Dorsolateral prefrontal cortex (tissue), 120 donors: ENCODE measurements at regions of chr15 and their contacts with region 1.

Region 1: DNA sequence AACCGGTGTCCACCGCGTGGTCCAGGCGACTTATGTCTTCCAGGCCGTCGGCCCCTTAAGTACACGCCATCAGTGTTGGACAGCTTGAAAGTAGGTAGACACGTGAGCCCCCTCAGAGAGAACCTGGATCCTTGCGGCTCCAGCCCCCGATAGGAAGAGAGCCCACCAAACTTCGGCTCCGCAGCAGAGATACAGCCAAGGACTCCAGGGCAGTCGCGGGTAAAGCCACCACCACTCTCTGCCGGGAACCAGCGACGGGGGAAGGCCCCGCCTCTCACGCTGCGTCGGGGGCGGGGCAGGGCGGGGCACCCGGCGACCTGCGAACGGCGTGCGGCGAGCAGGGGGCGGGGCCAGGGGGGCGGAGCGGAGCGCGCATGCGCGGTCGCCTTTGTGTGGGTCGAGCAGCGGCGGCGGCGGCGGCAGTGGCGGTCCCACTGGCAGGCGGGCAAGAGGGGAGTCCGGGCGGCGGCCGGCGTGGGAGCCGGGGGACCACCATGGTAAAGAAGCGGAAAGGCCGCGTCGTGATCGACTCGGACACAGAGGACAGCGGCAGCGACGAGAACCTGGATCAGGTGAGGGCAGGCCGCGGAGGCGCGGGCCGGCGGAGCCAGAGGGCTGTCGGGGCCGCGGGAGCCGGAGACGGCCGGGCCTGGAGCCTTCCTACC is at the start of gene RTF1:
- DNase-seq: peak; percentile 87 to 98 (median 92)
- H3K4me3 ChIP-seq: peak within 1 kb of the TSS; percentile 64 to 100 (median 98)
- H3K27ac ChIP-seq: peak within 1 kb of the TSS in 57 of 59 donors; percentile 7 to 95 (median 83)
- H3K27me3 ChIP-seq: no peaks in the 10 kb centered on the region
- CTCF ChIP-seq: peak in 20 of 56 donors; percentile 0 to 45 (median 23)
- total RNA-seq, gene RTF1: 17.2 to 72.4 (median 43.7) TPM

Region 2: GRCh38 chr15:40814901-40815670 is 601.8 kb before region 1 on chr15:
- intact Hi-C with region 1: no loop called
- DNase-seq: peak in 4 of 10 donors; percentile 26 to 38 (median 33)
- H3K4me3 ChIP-seq: no peak overlapping the region
- H3K27ac ChIP-seq: peak overlapping the region in 3 of 59 donors; percentile 9 to 21 (median 19)
- H3K27me3 ChIP-seq: no peaks in the 10 kb centered on the region
- CTCF ChIP-seq: no peak

Region 3: DNA sequence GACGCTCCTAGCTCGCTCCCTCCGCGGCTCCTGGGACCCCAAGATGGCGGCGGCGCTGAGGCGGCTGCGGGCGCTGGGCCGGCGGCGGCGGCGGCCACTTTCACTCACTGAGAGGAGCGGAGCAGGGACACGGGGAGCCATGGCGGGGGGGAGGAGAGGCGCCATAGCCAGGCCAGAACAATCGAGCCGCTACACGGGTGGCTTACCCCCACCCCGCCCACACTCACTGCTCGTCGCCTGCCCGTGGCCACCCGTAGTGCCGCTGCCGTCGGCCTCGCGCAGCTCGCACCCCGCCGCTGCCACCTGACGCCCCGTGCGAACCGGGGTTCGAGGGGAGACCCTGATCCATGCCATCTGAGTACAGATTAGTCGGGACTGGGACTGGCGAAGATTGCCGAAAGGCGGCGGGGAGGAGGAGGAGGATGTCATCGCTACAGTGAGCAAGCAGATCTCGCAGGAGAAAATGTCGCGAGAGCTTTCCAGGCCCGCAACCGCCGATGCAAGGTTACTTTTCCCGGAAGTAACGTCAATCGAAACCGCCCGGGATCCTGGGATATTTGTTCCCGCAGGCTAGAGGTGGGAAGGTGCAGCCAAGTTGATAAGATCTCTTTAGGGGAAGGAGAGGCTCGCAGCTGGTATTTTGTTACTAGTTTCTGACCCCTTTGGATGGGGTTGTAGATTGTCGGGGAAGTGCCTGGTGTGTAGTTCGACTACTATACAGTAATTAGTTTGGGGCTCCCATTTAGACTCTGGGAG is 300.6 kb before region 1 on chr15 and contains the start of gene INO80:
- intact Hi-C with region 1: loop called in 1 of 2 experiments (anchors 10 kb)
- DNase-seq: peak; percentile 87 to 99 (median 96)
- H3K4me3 ChIP-seq: peak within 1 kb of the TSS; percentile 68 to 99 (median 92)
- H3K27ac ChIP-seq: peak within 1 kb of the TSS; percentile 89 to 100 (median 99)
- H3K27me3 ChIP-seq: no peaks in the 10 kb centered on the region
- CTCF ChIP-seq: peak in 27 of 56 donors; percentile 7 to 45 (median 26)
- total RNA-seq, gene INO80: 15.8 to 35.4 (median 24.2) TPM

Region 4: GRCh38 chr15:41283653-41284426 is 133.0 kb before region 1 on chr15:
- intact Hi-C with region 1: loop called in 1 of 2 experiments (anchors 10 kb)
- DNase-seq: peak; percentile 95 to 98 (median 97)
- H3K4me3 ChIP-seq: peak overlapping the region; percentile 66 to 100 (median 95)
- H3K27ac ChIP-seq: peak overlapping the region; percentile 26 to 97 (median 88)
- H3K27me3 ChIP-seq: no peaks in the 10 kb centered on the region
- CTCF ChIP-seq: peak in 12 of 56 donors; percentile 7 to 41 (median 22)

Region 5: GRCh38 chr15:41387646-41388045 is 29.2 kb before region 1 on chr15:
- intact Hi-C with region 1: no loop called
- DNase-seq: no peak
- H3K4me3 ChIP-seq: no peak overlapping the region
- H3K27ac ChIP-seq: no peak overlapping the region
- H3K27me3 ChIP-seq: no peaks in the 10 kb centered on the region
- CTCF ChIP-seq: no peak

Region 6: GRCh38 chr15:41401904-41402267 is 15.0 kb before region 1 on chr15:
- intact Hi-C with region 1: loop called (anchors 1 to 2 kb)
- DNase-seq: no peak
- H3K4me3 ChIP-seq: peak overlapping the region; percentile 69 to 100 (median 90)
- H3K27ac ChIP-seq: peak overlapping the region in 54 of 59 donors; percentile 21 to 92 (median 76)
- H3K27me3 ChIP-seq: no peaks in the 10 kb centered on the region
- CTCF ChIP-seq: no peak